GM12878 (cell line): ENCODE measurements at regions of chr10 and their contacts with region 1.

Region 1: DNA sequence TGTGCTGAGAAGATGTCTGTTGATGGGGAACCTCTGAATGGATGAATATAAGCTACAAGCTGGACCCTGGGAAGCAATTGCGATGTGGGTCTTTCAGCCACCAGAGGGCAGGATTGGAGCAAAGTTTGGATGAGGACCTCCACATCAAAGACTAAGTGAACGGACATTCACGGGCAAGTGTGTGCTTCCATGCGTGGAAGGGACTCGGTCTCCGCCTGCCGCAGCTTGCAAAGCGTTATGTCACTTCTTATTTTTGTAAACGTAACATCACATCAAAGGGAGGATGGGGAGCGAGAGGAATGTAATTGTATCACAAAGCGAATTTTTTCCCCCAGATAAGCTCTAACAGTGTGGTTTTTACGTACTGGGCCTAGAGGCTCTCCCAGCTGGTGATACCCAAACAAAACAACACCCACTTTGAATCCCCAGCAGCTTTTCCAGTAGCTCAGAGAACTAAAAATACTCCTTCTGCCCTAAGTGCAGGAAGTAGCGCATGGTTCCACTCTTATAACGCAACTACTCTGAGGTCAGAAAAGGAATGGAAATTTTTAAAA is 65.0 kb downstream of the VWA2 start:
- DNase-seq: peak; percentile 67
- ATAC-seq: peak; percentile 92
- H3K4me3 ChIP-seq: peak overlapping the region; percentile 78
- H3K27ac ChIP-seq: no peak overlapping the region
- H3K4me1 ChIP-seq: peaks cover 8% of the 10 kb centered on the region
- H3K27me3 ChIP-seq: no peaks in the 10 kb centered on the region
- CTCF ChIP-seq: peak; percentile 77 to 91 (median 87); a peak in 5 of 6 replicates
- EP300 ChIP-seq: no peak
- POLR2A ChIP-seq: no peak
- RAD21 ChIP-seq: peak; percentile 90

Region 2: DNA sequence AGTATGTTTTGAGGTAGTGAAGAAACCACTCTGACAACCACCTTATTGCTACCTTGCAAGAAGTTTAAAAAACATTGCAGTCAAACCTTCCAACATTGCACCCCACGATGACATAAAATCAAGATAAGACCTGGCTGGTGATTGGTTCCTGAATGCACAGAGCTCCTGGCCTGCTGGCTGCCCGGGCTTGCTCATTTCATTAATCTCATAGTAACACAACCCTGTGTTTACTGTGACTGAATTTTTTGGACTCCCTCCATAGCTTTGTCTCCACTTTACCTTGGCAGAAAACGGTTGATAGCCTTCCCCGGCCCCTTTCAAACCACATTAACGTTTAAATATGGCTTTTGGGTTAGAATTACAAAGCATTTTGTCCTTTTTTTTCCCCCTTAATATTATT is 37.6 kb before region 1 on chr10:
- CTCF ChIA-PET with region 1: interaction called, 14 read pairs
- POLR2A ChIA-PET with region 1: no interaction called
- RAD21 ChIA-PET with region 1: no interaction called
- SMC1A ChIA-PET with region 1: no interaction called
- in situ Hi-C with region 1: no loop called
- intact Hi-C with region 1: no loop called
- DNase-seq: no peak
- ATAC-seq: no peak
- H3K4me3 ChIP-seq: no peak overlapping the region
- H3K27ac ChIP-seq: no peak overlapping the region
- H3K4me1 ChIP-seq: no peaks in the 10 kb centered on the region
- H3K27me3 ChIP-seq: no peaks in the 10 kb centered on the region; a peak in 2 of 4 replicates
- CTCF ChIP-seq: no peak
- EP300 ChIP-seq: no peak
- POLR2A ChIP-seq: no peak
- RAD21 ChIP-seq: no peak

Region 3: DNA sequence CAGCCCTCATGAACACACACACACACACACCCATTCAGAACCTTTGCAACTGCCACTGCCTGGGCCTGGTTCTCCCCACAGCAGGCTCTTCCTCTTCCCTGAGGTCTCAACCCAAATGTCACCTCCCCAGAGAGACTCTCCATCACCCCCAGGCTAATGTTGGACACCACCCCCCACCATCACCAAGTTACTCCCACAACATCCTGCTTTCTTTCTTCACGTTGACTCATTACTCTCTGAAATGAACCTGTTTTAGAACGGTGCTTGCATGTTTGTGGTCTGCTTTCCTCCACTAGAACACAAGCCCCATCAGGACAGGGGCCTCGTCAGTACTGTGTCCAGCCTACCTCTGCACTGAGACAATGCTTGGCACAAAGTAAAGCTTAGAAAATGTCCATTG is 84.2 kb after region 1 on chr10:
- CTCF ChIA-PET with region 1: interaction called, 23 read pairs
- POLR2A ChIA-PET with region 1: interaction called, 3 read pairs
- RAD21 ChIA-PET with region 1: interaction called, 13 read pairs
- SMC1A ChIA-PET with region 1: interaction called, 15 read pairs
- in situ Hi-C with region 1: no loop called
- intact Hi-C with region 1: no loop called
- DNase-seq: peak; percentile 66
- ATAC-seq: peak; percentile 69
- H3K4me3 ChIP-seq: no peak overlapping the region
- H3K27ac ChIP-seq: peak overlapping the region; percentile 75
- H3K4me1 ChIP-seq: peaks cover 26% of the 10 kb centered on the region
- H3K27me3 ChIP-seq: no peaks in the 10 kb centered on the region
- CTCF ChIP-seq: no peak
- EP300 ChIP-seq: no peak
- POLR2A ChIP-seq: no peak
- RAD21 ChIP-seq: no peak

Region 4: DNA sequence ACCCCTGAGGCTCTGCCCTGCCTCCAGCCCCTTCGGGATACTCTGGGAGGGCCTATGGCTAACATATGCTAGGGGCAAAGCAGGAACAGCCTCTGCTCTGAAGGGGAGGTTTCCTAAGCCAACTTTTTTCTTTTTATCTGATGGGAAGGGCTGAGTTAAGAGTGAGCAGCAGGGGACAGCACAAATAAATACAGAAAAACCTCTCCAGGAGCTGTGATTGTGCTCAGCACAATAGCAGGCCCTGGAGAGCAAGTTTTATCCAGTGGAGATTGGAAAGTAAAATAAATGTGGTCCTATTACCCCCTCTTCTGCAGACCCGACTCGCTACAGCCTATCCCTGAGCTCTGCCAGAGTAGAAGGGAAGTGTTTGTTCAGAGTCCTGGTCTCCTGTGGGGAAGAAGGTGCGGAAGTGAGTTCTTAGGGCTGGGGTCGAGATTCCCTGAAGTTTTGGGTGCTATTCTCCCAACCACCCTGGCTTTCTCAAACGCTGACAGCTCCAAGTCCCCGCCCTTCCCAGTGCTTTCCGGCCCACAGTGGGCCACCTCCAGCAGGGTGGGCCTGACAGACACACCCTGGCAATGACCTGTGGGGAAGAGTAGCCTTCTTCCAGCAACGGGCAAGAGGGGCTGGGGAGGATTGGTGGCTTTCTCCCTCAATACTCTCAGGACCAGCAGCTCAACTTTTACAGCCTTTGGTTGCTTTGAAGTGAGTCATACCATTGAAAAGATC is 123.2 kb after region 1 on chr10:
- CTCF ChIA-PET with region 1: interaction called, 15 read pairs
- POLR2A ChIA-PET with region 1: no interaction called
- RAD21 ChIA-PET with region 1: interaction called, 9 read pairs
- SMC1A ChIA-PET with region 1: interaction called, 10 read pairs
- in situ Hi-C with region 1: no loop called
- intact Hi-C with region 1: no loop called
- DNase-seq: no peak
- ATAC-seq: no peak
- H3K4me3 ChIP-seq: no peak overlapping the region
- H3K27ac ChIP-seq: no peak overlapping the region
- H3K4me1 ChIP-seq: no peaks in the 10 kb centered on the region
- H3K27me3 ChIP-seq: no peaks in the 10 kb centered on the region; a peak in 2 of 4 replicates
- CTCF ChIP-seq: no peak
- EP300 ChIP-seq: no peak
- POLR2A ChIP-seq: no peak
- RAD21 ChIP-seq: no peak

Region 5: GRCh38 chr10:114453576-114453975 is 149.5 kb after region 1 on chr10:
- CTCF ChIA-PET with region 1: interaction called, 45 read pairs
- POLR2A ChIA-PET with region 1: interaction called, 3 read pairs
- RAD21 ChIA-PET with region 1: interaction called, 40 read pairs
- SMC1A ChIA-PET with region 1: interaction called, 30 read pairs
- in situ Hi-C with region 1: no loop called
- intact Hi-C with region 1: no loop called
- DNase-seq: no peak
- ATAC-seq: no peak
- H3K4me3 ChIP-seq: no peak overlapping the region
- H3K27ac ChIP-seq: no peak overlapping the region
- H3K4me1 ChIP-seq: no peaks in the 10 kb centered on the region
- H3K27me3 ChIP-seq: no peaks in the 10 kb centered on the region
- CTCF ChIP-seq: no peak
- EP300 ChIP-seq: no peak
- POLR2A ChIP-seq: no peak
- RAD21 ChIP-seq: no peak

Region 6: GRCh38 chr10:114550756-114551635 is 246.9 kb after region 1 on chr10:
- CTCF ChIA-PET with region 1: interaction called, 13 read pairs
- POLR2A ChIA-PET with region 1: no interaction called
- RAD21 ChIA-PET with region 1: interaction called, 11 read pairs
- SMC1A ChIA-PET with region 1: interaction called, 14 read pairs
- in situ Hi-C with region 1: loop called (anchors 5 kb)
- intact Hi-C with region 1: loop called (anchors 5 kb)
- DNase-seq: no peak
- ATAC-seq: no peak; the same call in 2 of the 3 replicates
- H3K4me3 ChIP-seq: no peak overlapping the region
- H3K27ac ChIP-seq: no peak overlapping the region
- H3K4me1 ChIP-seq: no peaks in the 10 kb centered on the region
- H3K27me3 ChIP-seq: no peaks in the 10 kb centered on the region; a peak in 1 of 4 replicates
- CTCF ChIP-seq: peak in 2 of 3 experiments; percentile 37 to 42; a peak in 3 of 6 replicates
- EP300 ChIP-seq: no peak
- POLR2A ChIP-seq: no peak
- RAD21 ChIP-seq: peak; percentile 41

Region 7: DNA sequence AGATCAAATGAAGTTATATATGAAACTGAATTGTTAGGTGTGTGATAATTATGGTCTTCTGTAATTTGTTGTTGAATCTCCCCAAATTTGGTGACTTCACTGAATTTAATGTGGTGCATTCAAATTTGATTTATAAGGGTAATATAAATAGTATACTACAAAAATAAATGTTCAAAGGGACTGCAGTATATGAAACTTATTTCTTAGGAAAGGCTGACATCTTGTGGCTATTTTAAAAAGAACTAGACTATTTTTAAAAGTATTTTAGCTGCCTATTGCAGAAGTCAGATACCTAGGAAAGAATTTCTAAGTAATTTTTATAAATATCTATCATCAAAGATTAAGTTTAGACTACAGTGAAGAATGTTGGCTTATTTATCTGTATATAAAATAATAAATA is 825.7 kb after region 1 on chr10:
- CTCF ChIA-PET with region 1: interaction called, 7 read pairs
- POLR2A ChIA-PET with region 1: no interaction called
- RAD21 ChIA-PET with region 1: interaction called, 9 read pairs
- SMC1A ChIA-PET with region 1: interaction called, 8 read pairs
- in situ Hi-C with region 1: loop called (anchors 10 kb)
- intact Hi-C with region 1: loop called (anchors 2 kb)
- DNase-seq: no peak
- ATAC-seq: peak; percentile 50
- H3K4me3 ChIP-seq: no peak overlapping the region
- H3K27ac ChIP-seq: no peak overlapping the region
- H3K4me1 ChIP-seq: no peaks in the 10 kb centered on the region
- H3K27me3 ChIP-seq: no peaks in the 10 kb centered on the region
- CTCF ChIP-seq: no peak; a peak in 1 of 6 replicates
- EP300 ChIP-seq: no peak
- POLR2A ChIP-seq: no peak
- RAD21 ChIP-seq: peak; percentile 55